ENCODE measurements at regions of chr12 and their contacts with region 1.

Region 1: DNA sequence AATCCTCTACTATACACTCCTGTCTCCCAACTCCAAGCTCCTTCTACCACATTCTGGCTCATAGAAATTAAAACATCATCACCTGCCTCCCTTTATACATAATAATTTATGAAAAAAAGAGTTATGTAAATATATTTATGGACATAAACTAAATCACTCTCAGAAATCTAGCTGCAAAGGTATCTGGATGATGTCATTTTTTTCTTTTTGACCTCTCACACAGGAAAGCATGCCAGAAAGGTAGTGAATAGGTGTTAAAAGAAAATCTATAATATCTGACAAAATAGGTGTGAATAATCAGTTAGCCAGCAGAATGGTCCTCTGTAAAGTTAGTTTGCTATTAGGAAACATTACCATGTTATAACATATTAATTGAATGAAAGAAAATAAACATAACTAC is 7.7 kb downstream of the LRRIQ1 start:
- DNase-seq: no peak
- ATAC-seq: no peak
- H3K4me3 ChIP-seq: no peak overlapping the region
- H3K27ac ChIP-seq: no peak overlapping the region
- H3K4me1 ChIP-seq: no peaks in the 10 kb centered on the region
- CTCF ChIP-seq: no peak
- EP300 ChIP-seq: no peak
- POLR2A ChIP-seq: no peak
- RAD21 ChIP-seq: no peak

Region 2: GRCh38 chr12:85057370-85057963 is 13.6 kb after region 1 on chr12:
- CTCF ChIA-PET with region 1: interaction called, 19 read pairs
- POLR2A ChIA-PET with region 1: no interaction called
- DNase-seq: peak; percentile 5 to 68
- ATAC-seq: peak in 1 of 2 experiments; percentile 81; a peak in 3 of 6 replicates
- H3K4me3 ChIP-seq: no peak overlapping the region
- H3K27ac ChIP-seq: no peak overlapping the region
- H3K4me1 ChIP-seq: no peaks in the 10 kb centered on the region
- CTCF ChIP-seq: peak; percentile 70
- EP300 ChIP-seq: no peak
- POLR2A ChIP-seq: no peak
- RAD21 ChIP-seq: peak; percentile 62 to 69